IMR-90 (cell line): ENCODE measurements at regions of chr17 and their contacts with region 1.

Region 1: GRCh38 chr17:3012926-3013581 is 50.4 kb downstream of the OR1D5 start:
- DNase-seq: peak; percentile 40
- ATAC-seq: peak; percentile 79
- H3K4me3 ChIP-seq: no peak overlapping the region
- H3K27ac ChIP-seq: no peak overlapping the region
- H3K4me1 ChIP-seq: 0 out of 2 replicates have a peak, but pooled peaks cover 2% of the 10 kb centered on the region
- H3K27me3 ChIP-seq: no peaks in the 10 kb centered on the region
- CTCF ChIP-seq: peak; percentile 57
- POLR2A ChIP-seq: no peak
- RAD21 ChIP-seq: peak; percentile 78

Region 2: GRCh38 chr17:2814481-2815341 is 198.3 kb before region 1 on chr17:
- CTCF ChIA-PET with region 1: no interaction called
- POLR2A ChIA-PET with region 1: no interaction called
- dilution Hi-C with region 1: no loop called
- in situ Hi-C with region 1: no loop called
- intact Hi-C with region 1: no loop called
- DNase-seq: no peak
- ATAC-seq: no peak
- H3K4me3 ChIP-seq: no peak overlapping the region
- H3K27ac ChIP-seq: no peak overlapping the region
- H3K4me1 ChIP-seq: peaks cover 3% of the 10 kb centered on the region; the same call in 1 of the 2 replicates
- H3K27me3 ChIP-seq: no peaks in the 10 kb centered on the region
- CTCF ChIP-seq: no peak
- POLR2A ChIP-seq: no peak
- RAD21 ChIP-seq: no peak

Region 3: DNA sequence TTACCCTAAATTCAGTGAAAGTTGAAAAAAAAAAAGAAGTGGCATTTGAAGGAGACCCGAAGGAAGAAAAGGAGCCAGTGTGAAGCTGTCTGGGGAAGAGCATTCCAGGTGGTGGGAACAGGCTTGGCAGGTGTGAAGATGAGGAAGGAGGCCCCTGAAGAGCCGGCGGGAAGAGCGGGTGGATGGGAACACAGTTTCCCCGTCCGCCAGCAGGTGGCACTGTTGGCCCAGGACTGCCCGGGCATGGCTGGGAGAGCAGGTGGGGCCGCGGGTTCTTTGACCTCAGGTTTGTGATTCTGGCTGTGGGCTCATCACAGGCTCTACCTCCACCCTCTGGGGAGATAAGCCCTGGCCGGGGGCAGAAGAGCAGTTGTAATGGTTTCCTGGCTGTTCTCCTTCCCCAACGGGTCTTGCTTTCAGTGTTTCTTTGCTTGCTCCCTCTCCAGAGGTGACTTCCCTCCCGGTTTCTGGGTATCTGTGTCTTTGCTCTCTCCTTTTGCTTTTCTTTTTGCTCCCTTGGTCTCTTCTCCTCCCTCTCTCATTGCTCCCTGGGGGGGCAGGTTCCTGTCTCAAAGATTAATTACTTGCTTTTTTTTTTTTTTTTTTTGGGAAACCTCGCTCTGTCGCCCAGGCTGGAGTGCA is 184.5 kb before region 1 on chr17:
- CTCF ChIA-PET with region 1: no interaction called
- POLR2A ChIA-PET with region 1: no interaction called
- dilution Hi-C with region 1: no loop called
- in situ Hi-C with region 1: no loop called
- intact Hi-C with region 1: loop called (anchors 1 kb)
- DNase-seq: peak; percentile 19
- ATAC-seq: peak; percentile 91
- H3K4me3 ChIP-seq: no peak overlapping the region
- H3K27ac ChIP-seq: no peak overlapping the region
- H3K4me1 ChIP-seq: no peaks in the 10 kb centered on the region
- H3K27me3 ChIP-seq: peaks cover under 1% of the 10 kb centered on the region; the same call in 1 of the 2 replicates
- CTCF ChIP-seq: peak; percentile 81
- POLR2A ChIP-seq: no peak; the same call in 1 of the 2 replicates
- RAD21 ChIP-seq: peak; percentile 90

Region 4: DNA sequence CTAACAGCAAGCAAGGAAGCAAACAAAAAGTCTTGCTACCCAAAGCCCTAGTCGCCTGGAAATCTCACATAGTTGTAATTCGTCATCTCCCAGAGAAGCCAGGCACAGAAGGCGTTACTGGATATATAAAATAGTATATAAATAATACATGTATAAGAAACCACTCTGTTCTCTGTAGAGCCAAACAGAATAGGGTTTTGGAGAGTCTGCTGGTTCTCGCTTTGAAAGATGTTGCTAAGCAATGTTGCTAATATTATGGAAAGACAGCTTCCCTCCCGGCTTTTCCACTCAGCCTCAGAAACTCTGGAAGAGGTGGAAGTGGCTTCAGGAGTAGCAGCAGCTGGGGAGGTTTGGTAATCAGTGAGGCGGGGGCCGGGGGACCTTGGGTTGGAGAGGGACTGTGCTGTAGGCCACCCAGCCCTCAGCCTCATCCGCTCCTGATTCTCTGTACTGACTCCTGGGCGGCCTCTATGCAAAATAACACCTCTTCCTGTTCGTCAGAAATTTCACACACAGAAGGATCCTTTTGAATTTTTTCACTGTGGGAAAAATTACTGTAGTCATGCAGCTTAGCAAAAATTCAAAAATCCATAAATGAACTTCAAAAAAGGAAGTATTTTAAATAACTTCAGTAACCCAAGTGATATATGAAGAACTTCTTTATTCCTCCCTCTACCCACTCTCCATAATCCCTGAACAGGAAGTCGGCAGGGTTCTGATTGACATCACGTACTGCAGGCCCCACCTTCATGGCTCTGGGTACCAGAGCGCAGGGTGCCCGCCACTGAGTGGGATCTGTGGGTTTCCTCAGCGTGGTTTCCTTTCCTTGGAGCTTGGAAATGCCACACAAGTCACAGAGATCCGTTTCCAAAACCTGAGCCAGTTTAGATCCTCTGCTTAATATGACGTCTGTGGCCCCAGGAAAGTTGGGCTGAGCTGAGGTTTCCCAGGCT is 165.4 kb before region 1 on chr17:
- CTCF ChIA-PET with region 1: no interaction called
- POLR2A ChIA-PET with region 1: no interaction called
- dilution Hi-C with region 1: no loop called
- in situ Hi-C with region 1: loop called (anchors 10 kb)
- intact Hi-C with region 1: loop called (anchors 2 kb)
- DNase-seq: no peak
- ATAC-seq: no peak
- H3K4me3 ChIP-seq: no peak overlapping the region
- H3K27ac ChIP-seq: no peak overlapping the region
- H3K4me1 ChIP-seq: no peaks in the 10 kb centered on the region
- H3K27me3 ChIP-seq: no peaks in the 10 kb centered on the region
- CTCF ChIP-seq: no peak
- POLR2A ChIP-seq: no peak
- RAD21 ChIP-seq: no peak

Region 5: DNA sequence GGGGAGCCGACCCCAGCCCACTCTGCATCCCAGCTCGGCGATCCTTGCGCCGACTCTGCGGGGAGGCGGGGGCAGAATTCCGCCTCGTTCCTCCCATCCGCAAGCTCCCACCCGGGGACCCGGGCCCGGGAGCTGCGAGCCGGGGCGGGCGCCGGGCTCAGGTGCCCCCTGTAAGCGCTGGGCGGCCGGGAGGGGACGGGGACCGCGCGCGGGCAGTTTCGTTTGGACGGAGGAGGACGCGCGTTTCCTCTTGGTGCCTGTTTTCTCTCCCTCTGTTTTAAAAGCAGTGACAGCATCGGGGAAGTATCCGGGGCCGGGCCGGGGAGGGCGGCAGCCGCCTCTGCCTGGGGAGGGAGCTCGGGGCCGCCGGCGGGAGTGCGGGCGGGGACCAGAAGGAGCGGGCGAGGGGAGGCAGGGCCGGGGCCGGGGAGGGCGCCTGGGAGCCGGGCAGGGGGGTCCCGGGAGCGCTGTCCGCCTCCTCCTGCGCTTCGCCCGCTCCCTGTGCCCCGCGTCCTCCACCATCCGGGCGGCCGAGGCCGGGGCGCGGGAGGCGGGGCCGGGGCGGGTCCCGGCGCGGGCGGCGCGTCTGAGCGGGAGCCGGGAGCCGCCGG is 159.8 kb before region 1 on chr17:
- CTCF ChIA-PET with region 1: no interaction called
- POLR2A ChIA-PET with region 1: no interaction called
- dilution Hi-C with region 1: no loop called
- in situ Hi-C with region 1: loop called (anchors 10 kb)
- intact Hi-C with region 1: loop called (anchors 2 kb)
- DNase-seq: peak; percentile 49
- ATAC-seq: peak; percentile 79
- H3K4me3 ChIP-seq: peak overlapping the region; percentile 89
- H3K27ac ChIP-seq: peak overlapping the region; percentile 9; the same call in 1 of the 2 replicates
- H3K4me1 ChIP-seq: peaks cover 2% of the 10 kb centered on the region; the same call in 1 of the 2 replicates
- H3K27me3 ChIP-seq: no peaks in the 10 kb centered on the region; the same call in 1 of the 2 replicates
- CTCF ChIP-seq: no peak
- POLR2A ChIP-seq: no peak
- RAD21 ChIP-seq: no peak